OCI-LY7 (cell line): ENCODE measurements at regions of chr2 and their contacts with region 1.

Region 1: DNA sequence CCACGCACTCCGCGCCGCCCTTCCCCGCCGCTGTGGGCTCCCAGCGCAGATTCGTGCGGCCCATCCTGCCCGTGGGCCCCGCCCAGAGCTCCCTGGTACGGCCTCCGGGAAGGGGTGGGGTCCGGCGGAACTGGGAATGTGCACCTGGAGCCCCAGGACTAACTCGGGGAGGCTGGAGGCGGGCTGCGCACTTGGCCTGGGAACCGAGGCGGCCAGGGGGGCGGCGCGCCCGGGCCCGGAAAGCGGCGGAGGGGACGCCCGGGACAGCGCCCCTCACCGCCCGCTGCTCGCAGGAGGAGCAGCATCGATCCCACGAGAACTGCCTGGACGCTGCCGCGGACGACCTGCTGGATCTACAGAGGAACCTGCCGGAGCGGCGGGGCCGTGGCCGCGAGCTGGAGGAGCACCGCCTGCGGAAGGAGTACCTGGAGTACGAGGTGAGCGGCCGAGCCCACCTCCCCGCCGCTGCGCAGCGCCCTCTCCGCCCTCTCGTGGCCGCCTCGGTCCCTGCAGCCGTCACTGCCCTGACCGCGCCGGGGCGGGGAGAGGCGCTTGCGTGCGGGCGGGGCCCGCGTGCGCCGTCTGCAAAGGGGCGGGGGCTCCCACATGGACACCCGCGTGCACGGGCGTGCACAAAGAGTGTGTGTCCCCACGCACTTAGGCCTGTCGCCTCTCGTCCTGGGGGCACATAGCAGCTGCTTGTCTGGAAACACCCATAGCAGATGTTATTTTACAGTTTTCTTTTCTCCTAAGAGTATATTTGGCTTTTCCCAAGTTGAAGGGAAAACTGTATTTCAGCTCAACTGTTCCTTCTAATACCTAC is 25.2 kb downstream of the PSD4 start:
- DNase-seq: peak; percentile 65
- H3K4me3 ChIP-seq: no peak overlapping the region
- H3K27ac ChIP-seq: no peak overlapping the region
- H3K4me1 ChIP-seq: peaks cover 15% of the 10 kb centered on the region
- CTCF ChIP-seq: peak; percentile 77

Region 2: GRCh38 chr2:113173542-113174395 is 25.2 kb before region 1 on chr2 and contains the start of gene PSD4:
- CTCF ChIA-PET with region 1: interaction called, 7 read pairs
- POLR2A ChIA-PET with region 1: interaction called, 6 read pairs
- intact Hi-C with region 1: loop called (anchors 1 kb)
- DNase-seq: peak; percentile 91
- H3K4me3 ChIP-seq: peak within 1 kb of the TSS; percentile 90
- H3K27ac ChIP-seq: peak within 1 kb of the TSS; percentile 87
- H3K4me1 ChIP-seq: peaks cover 30% of the 10 kb centered on the region
- CTCF ChIP-seq: peak; percentile 43
- total RNA-seq, gene PSD4: 78.2 and 99.6 TPM in 2 replicates